ENCODE measurements at regions of chr3 and their contacts with region 1.

Region 1: GRCh38 chr3:73508330-73508954 is 116.3 kb downstream of the PDZRN3 start:
- DNase-seq: peak; percentile 51
- H3K4me3 ChIP-seq: no peak overlapping the region; a peak in 1 of 4 replicates
- H3K27ac ChIP-seq: no peak overlapping the region; a peak in 1 of 4 replicates
- H3K4me1 ChIP-seq: peaks cover 13 to 25% of the 10 kb centered on the region in 2 experiments
- H3K27me3 ChIP-seq: no peaks in the 10 kb centered on the region
- CTCF ChIP-seq: peak; percentile 86
- EP300 ChIP-seq: no peak
- RAD21 ChIP-seq: peak; percentile 81

Region 2: DNA sequence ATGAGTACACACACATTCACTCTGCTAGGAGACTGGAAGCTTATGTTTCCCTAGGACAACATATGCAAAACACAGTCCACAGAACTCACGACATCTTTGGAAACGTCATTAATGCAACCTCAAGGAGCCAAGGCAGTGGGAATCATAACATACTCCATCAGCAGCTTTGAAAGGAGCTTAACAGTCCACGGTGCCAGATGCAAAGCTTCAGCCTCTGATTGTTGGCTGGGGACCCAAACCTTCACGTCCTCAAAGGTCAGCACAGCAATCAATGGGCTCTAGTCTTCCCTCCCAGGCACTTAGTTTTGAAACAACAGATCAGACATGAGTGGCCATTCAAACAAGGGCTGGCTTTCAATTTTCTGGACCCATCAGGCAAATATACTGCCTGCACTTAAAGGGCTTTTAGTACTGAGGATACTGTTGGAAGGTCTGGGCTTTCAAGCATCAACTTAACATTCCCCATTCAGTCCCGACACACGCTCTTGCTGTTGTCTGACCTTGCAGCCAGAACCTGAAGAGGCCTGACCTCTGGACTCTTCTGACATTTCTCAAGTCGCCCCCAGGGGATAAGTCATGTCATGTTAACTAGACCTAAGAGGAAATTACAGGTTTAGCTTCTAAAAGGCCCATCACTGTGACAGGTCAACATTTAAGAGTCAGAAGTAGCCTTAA is 106.7 kb before region 1 on chr3:
- CTCF ChIA-PET with region 1: no interaction called
- POLR2A ChIA-PET with region 1: no interaction called
- DNase-seq: no peak
- H3K4me3 ChIP-seq: no peak overlapping the region
- H3K27ac ChIP-seq: peak overlapping the region; percentile 11 to 16; a peak in 2 of 4 replicates
- H3K4me1 ChIP-seq: peaks cover 0 to 23% of the 10 kb centered on the region in 2 experiments; a peak in 2 of 4 replicates
- H3K27me3 ChIP-seq: no peaks in the 10 kb centered on the region
- CTCF ChIP-seq: no peak
- EP300 ChIP-seq: no peak
- RAD21 ChIP-seq: no peak

Region 3: GRCh38 chr3:73484656-73485248 is 23.7 kb before region 1 on chr3:
- CTCF ChIA-PET with region 1: interaction called, 52 read pairs
- POLR2A ChIA-PET with region 1: no interaction called
- DNase-seq: no peak
- H3K4me3 ChIP-seq: no peak overlapping the region
- H3K27ac ChIP-seq: peak overlapping the region; percentile 71 to 96
- H3K4me1 ChIP-seq: peaks cover 14 to 54% of the 10 kb centered on the region in 2 experiments
- H3K27me3 ChIP-seq: no peaks in the 10 kb centered on the region
- CTCF ChIP-seq: no peak
- EP300 ChIP-seq: no peak
- RAD21 ChIP-seq: no peak

Region 4: GRCh38 chr3:73493543-73494308 is 14.7 kb before region 1 on chr3:
- CTCF ChIA-PET with region 1: interaction called, 52 read pairs
- POLR2A ChIA-PET with region 1: no interaction called
- DNase-seq: no peak
- H3K4me3 ChIP-seq: no peak overlapping the region
- H3K27ac ChIP-seq: peak overlapping the region; percentile 34 to 67
- H3K4me1 ChIP-seq: peaks cover 21 to 28% of the 10 kb centered on the region in 2 experiments; a peak in 3 of 4 replicates
- H3K27me3 ChIP-seq: no peaks in the 10 kb centered on the region
- CTCF ChIP-seq: no peak
- EP300 ChIP-seq: no peak
- RAD21 ChIP-seq: no peak

Region 5: GRCh38 chr3:73520865-73521461 is 12.5 kb after region 1 on chr3:
- CTCF ChIA-PET with region 1: interaction called, 12 read pairs
- POLR2A ChIA-PET with region 1: no interaction called
- DNase-seq: no peak
- H3K4me3 ChIP-seq: no peak overlapping the region
- H3K27ac ChIP-seq: no peak overlapping the region
- H3K4me1 ChIP-seq: peaks cover 0 to 5% of the 10 kb centered on the region in 2 experiments; a peak in 1 of 4 replicates
- H3K27me3 ChIP-seq: no peaks in the 10 kb centered on the region
- CTCF ChIP-seq: no peak
- EP300 ChIP-seq: no peak
- RAD21 ChIP-seq: no peak

Region 6: GRCh38 chr3:73624821-73625665 is 116.6 kb after region 1 on chr3 and contains the start of gene PDZRN3:
- CTCF ChIA-PET with region 1: interaction called, 40 read pairs
- POLR2A ChIA-PET with region 1: interaction called, 4 read pairs
- DNase-seq: peak; percentile 54
- H3K4me3 ChIP-seq: peak within 1 kb of the TSS; percentile 76 to 87
- H3K27ac ChIP-seq: peak within 1 kb of the TSS; percentile 74 to 86
- H3K4me1 ChIP-seq: peaks cover 0 to 37% of the 10 kb centered on the region in 2 experiments; a peak in 2 of 4 replicates
- H3K27me3 ChIP-seq: no peaks in the 10 kb centered on the region
- CTCF ChIP-seq: 0 out of 2 replicates have a peak, but pooled peaks have one; percentile 8
- EP300 ChIP-seq: peak in 1 of 2 experiments; percentile 32; a peak in 1 of 4 replicates
- RAD21 ChIP-seq: peak; percentile 13; the same call in 1 of the 2 replicates
- polyA plus RNA-seq, gene PDZRN3: 7.9 and 10.3 TPM in 2 replicates

Region 7: GRCh38 chr3:73768524-73769308 is 260.3 kb after region 1 on chr3:
- CTCF ChIA-PET with region 1: interaction called, 16 read pairs
- POLR2A ChIA-PET with region 1: no interaction called
- DNase-seq: peak; percentile 22
- H3K4me3 ChIP-seq: no peak overlapping the region
- H3K27ac ChIP-seq: peak overlapping the region; percentile 64 to 66
- H3K4me1 ChIP-seq: peaks cover 16 to 17% of the 10 kb centered on the region in 2 experiments; a peak in 3 of 4 replicates
- H3K27me3 ChIP-seq: no peaks in the 10 kb centered on the region
- CTCF ChIP-seq: peak; percentile 52
- EP300 ChIP-seq: peak; percentile 65 to 70; a peak in 3 of 4 replicates
- RAD21 ChIP-seq: peak; percentile 67

Region 8: GRCh38 chr3:73848173-73848906 is 339.9 kb after region 1 on chr3:
- CTCF ChIA-PET with region 1: interaction called, 75 read pairs
- POLR2A ChIA-PET with region 1: no interaction called
- DNase-seq: peak; percentile 48
- H3K4me3 ChIP-seq: no peak overlapping the region; a peak in 1 of 4 replicates
- H3K27ac ChIP-seq: no peak overlapping the region
- H3K4me1 ChIP-seq: no peaks in the 10 kb centered on the region
- H3K27me3 ChIP-seq: no peaks in the 10 kb centered on the region
- CTCF ChIP-seq: peak; percentile 94
- EP300 ChIP-seq: no peak
- RAD21 ChIP-seq: peak; percentile 87

Measured in SK-N-SH (cell line).